Heart right ventricle (tissue), 16 donors: ENCODE measurements at regions of chr10 and their contacts with region 1.

Region 1: DNA sequence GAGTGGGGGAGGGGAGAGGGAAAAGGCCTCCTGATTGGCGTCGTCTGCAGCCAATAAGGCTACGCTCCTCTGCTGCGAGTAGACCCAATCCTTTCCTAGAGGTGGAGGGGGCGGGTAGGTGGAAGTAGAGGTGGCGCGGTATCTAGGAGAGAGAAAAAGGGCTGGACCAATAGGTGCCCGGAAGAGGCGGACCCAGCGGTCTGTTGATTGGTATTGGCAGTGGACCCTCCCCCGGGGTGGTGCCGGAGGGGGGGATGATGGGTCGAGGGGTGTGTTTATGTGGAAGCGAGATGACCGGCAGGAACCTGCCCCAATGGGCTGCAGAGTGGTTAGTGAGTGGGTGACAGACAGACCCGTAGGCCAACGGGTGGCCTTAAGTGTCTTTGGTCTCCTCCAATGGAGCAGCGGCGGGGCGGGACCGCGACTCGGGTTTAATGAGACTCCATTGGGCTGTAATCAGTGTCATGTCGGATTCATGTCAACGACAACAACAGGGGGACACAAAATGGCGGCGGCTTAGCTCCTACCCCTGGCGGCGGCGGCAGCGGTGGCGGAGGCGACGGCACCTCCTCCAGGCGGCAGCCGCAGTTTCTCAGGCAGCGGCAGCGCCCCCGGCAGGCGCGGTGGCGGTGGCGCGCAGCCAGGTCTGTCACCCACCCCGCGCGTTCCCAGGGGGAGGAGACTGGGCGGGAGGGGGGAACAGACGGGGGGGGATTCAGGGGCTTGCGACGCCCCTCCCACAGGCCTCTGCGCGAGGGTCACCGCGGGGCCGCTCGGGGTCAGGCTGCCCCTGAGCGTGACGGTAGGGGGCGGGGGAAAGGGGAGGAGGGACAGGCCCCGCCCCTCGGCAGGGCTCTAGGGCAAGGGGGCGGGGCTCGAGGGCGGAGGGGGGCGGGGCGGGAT is at the start of gene KAT6B:
- DNase-seq: peak; percentile 100
- ATAC-seq: peak; percentile 89 to 96 (median 94)
- H3K4me3 ChIP-seq: peak within 1 kb of the TSS; percentile 77 to 98 (median 90)
- H3K27ac ChIP-seq: peak within 1 kb of the TSS; percentile 97 to 100 (median 99)
- H3K4me1 ChIP-seq: peaks cover 5 to 58% (median 46%) of the 10 kb centered on the region in 9 donors
- H3K27me3 ChIP-seq: no peaks in the 10 kb centered on the region
- CTCF ChIP-seq: peak in 5 of 9 donors; percentile 10 to 40 (median 34)
- total RNA-seq, gene KAT6B: 28.3 to 58.4 (median 51.5) TPM

Region 2: GRCh38 chr10:74262856-74263255 is 563.5 kb before region 1 on chr10:
- intact Hi-C with region 1: loop called in 2 of 10 experiments (anchors 5 to 10 kb)
- DNase-seq: no peak
- ATAC-seq: no peak
- H3K4me3 ChIP-seq: no peak overlapping the region
- H3K27ac ChIP-seq: no peak overlapping the region
- H3K4me1 ChIP-seq: peaks cover 0 to 5% (median 0%) of the 10 kb centered on the region in 9 donors
- H3K27me3 ChIP-seq: no peaks in the 10 kb centered on the region
- CTCF ChIP-seq: no peak

Region 3: DNA sequence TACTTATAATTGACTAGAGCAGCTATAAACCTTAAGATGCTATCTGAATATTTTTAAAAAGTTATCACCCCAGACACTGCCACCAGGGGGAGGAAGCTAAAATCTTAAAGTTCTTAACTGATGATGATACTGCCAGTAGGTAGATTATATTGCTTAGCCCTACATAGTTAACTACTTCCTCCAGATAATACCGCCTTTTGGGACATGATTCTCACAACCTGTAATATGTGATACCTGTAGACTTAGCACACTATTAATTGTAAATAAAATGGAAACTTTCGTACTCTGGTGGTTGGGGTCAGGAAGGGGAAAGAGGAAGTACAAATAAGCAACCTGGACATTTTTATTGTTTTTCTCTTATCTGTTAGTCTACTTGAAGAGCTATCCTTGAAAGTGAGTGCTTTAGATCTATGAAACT is 406.4 kb before region 1 on chr10:
- intact Hi-C with region 1: loop called in 1 of 10 experiments (anchors 10 kb)
- DNase-seq: no peak
- ATAC-seq: no peak
- H3K4me3 ChIP-seq: no peak overlapping the region
- H3K27ac ChIP-seq: no peak overlapping the region
- H3K4me1 ChIP-seq: peaks cover 0 to 6% (median 0%) of the 10 kb centered on the region in 9 donors
- H3K27me3 ChIP-seq: no peaks in the 10 kb centered on the region
- CTCF ChIP-seq: peak in 8 of 9 donors; percentile 21 to 54 (median 38)

Region 4: GRCh38 chr10:74602576-74602975 is 223.8 kb before region 1 on chr10:
- intact Hi-C with region 1: loop called in 1 of 10 experiments (anchors 10 kb)
- DNase-seq: no peak
- ATAC-seq: no peak
- H3K4me3 ChIP-seq: no peak overlapping the region
- H3K27ac ChIP-seq: no peak overlapping the region
- H3K4me1 ChIP-seq: peaks cover 0 to 18% (median 9%) of the 10 kb centered on the region in 9 donors
- H3K27me3 ChIP-seq: no peaks in the 10 kb centered on the region
- CTCF ChIP-seq: no peak

Region 5: GRCh38 chr10:74662635-74663034 is 163.8 kb before region 1 on chr10:
- intact Hi-C with region 1: no loop called
- DNase-seq: no peak
- ATAC-seq: no peak
- H3K4me3 ChIP-seq: no peak overlapping the region
- H3K27ac ChIP-seq: no peak overlapping the region
- H3K4me1 ChIP-seq: no peaks in the 10 kb centered on the region
- H3K27me3 ChIP-seq: no peaks in the 10 kb centered on the region
- CTCF ChIP-seq: no peak

Region 6: DNA sequence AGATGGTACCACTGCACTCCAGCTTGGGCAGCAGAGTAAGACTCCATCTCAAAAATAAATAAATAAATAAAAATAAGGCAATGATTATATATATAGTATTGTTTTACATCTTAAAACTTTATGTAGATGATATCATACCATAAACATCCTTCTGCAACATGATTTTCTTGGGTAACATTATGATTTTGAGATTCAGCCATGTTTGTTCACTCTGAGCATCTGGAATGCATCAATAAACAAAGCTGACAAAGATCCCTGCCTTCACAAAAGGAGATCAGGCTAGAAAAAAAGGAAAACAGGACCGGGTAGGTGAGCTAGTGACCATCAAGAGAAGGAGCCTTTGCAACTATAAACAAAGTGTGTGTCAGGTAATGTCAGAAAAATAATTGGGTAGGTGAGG is 31.9 kb before region 1 on chr10:
- intact Hi-C with region 1: no loop called
- DNase-seq: no peak
- ATAC-seq: no peak
- H3K4me3 ChIP-seq: no peak overlapping the region
- H3K27ac ChIP-seq: no peak overlapping the region
- H3K4me1 ChIP-seq: peaks cover 0 to under 1% (median 0%) of the 10 kb centered on the region in 9 donors
- H3K27me3 ChIP-seq: no peaks in the 10 kb centered on the region
- CTCF ChIP-seq: no peak

Region 7: GRCh38 chr10:74924251-74924951 is 98.0 kb after region 1 on chr10:
- intact Hi-C with region 1: loop called in 1 of 10 experiments (anchors 10 kb)
- DNase-seq: no peak
- ATAC-seq: peak in 7 of 8 donors; percentile 50 to 82 (median 70)
- H3K4me3 ChIP-seq: no peak overlapping the region
- H3K27ac ChIP-seq: peak overlapping the region; percentile 11 to 62 (median 42)
- H3K4me1 ChIP-seq: peaks cover 8 to 88% (median 69%) of the 10 kb centered on the region in 9 donors
- H3K27me3 ChIP-seq: no peaks in the 10 kb centered on the region
- CTCF ChIP-seq: no peak

Region 8: GRCh38 chr10:75099952-75100763 is 273.8 kb after region 1 on chr10:
- intact Hi-C with region 1: loop called in 3 of 10 experiments (anchors 10 kb)
- DNase-seq: peak; percentile 78 to 87
- ATAC-seq: peak; percentile 72 to 92 (median 86)
- H3K4me3 ChIP-seq: peak overlapping the region in 3 of 10 donors; percentile 3 to 27 (median 4)
- H3K27ac ChIP-seq: peak overlapping the region in 8 of 10 donors; percentile 6 to 88 (median 72)
- H3K4me1 ChIP-seq: peaks cover 4 to 28% (median 17%) of the 10 kb centered on the region in 9 donors
- H3K27me3 ChIP-seq: no peaks in the 10 kb centered on the region
- CTCF ChIP-seq: peak; percentile 97 to 100 (median 99)

Region 9: GRCh38 chr10:75235375-75236177 is 409.2 kb after region 1 on chr10 and contains the start of gene COMTD1:
- intact Hi-C with region 1: loop called in 2 of 10 experiments (anchors 5 to 10 kb)
- DNase-seq: peak; percentile 90 to 94
- ATAC-seq: peak; percentile 72 to 88 (median 82)
- H3K4me3 ChIP-seq: peak within 1 kb of the TSS; percentile 67 to 95 (median 86)
- H3K27ac ChIP-seq: peak within 1 kb of the TSS; percentile 6 to 93 (median 88)
- H3K4me1 ChIP-seq: peaks cover 0 to 29% (median 16%) of the 10 kb centered on the region in 9 donors
- H3K27me3 ChIP-seq: no peaks in the 10 kb centered on the region
- CTCF ChIP-seq: peak; percentile 100
- total RNA-seq, gene COMTD1: 16.4 to 51.5 (median 29.4) TPM

Region 10: GRCh38 chr10:75375838-75376237 is 549.4 kb after region 1 on chr10:
- intact Hi-C with region 1: no loop called
- DNase-seq: no peak
- ATAC-seq: peak in 7 of 8 donors; percentile 35 to 79 (median 61)
- H3K4me3 ChIP-seq: no peak overlapping the region
- H3K27ac ChIP-seq: peak overlapping the region in 1 of 10 donors; percentile 60
- H3K4me1 ChIP-seq: peaks cover 0 to 5% (median 0%) of the 10 kb centered on the region in 9 donors
- H3K27me3 ChIP-seq: peaks cover 0 to 3% (median 0%) of the 10 kb centered on the region in 7 donors
- CTCF ChIP-seq: no peak